GM12878 (cell line): ENCODE measurements at regions of chr16 and their contacts with region 1.

Region 1: GRCh38 chr16:27367461-27368357 is 34.3 kb upstream of the IL21R start:
- DNase-seq: peak; percentile 87
- ATAC-seq: peak; percentile 83
- H3K4me3 ChIP-seq: peak overlapping the region; percentile 46
- H3K27ac ChIP-seq: peak overlapping the region; percentile 95
- H3K4me1 ChIP-seq: peaks cover 34% of the 10 kb centered on the region
- H3K27me3 ChIP-seq: no peaks in the 10 kb centered on the region
- CTCF ChIP-seq: peak; percentile 84 to 91 (median 87)
- EP300 ChIP-seq: peak; percentile 72 to 86; a peak in 3 of 4 replicates
- POLR2A ChIP-seq: peak; percentile 54
- RAD21 ChIP-seq: peak; percentile 83

Region 2: GRCh38 chr16:27154705-27155521 is 212.8 kb before region 1 on chr16:
- CTCF ChIA-PET with region 1: interaction called, 93 read pairs
- POLR2A ChIA-PET with region 1: no interaction called
- RAD21 ChIA-PET with region 1: interaction called, 22 read pairs
- SMC1A ChIA-PET with region 1: interaction called, 43 read pairs
- in situ Hi-C with region 1: no loop called
- intact Hi-C with region 1: loop called (anchors 1 kb)
- DNase-seq: no peak
- ATAC-seq: peak; percentile 94
- H3K4me3 ChIP-seq: no peak overlapping the region
- H3K27ac ChIP-seq: no peak overlapping the region
- H3K4me1 ChIP-seq: peaks cover 3% of the 10 kb centered on the region
- H3K27me3 ChIP-seq: no peaks in the 10 kb centered on the region
- CTCF ChIP-seq: peak; percentile 84 to 99 (median 99)
- EP300 ChIP-seq: no peak
- POLR2A ChIP-seq: no peak
- RAD21 ChIP-seq: peak; percentile 72

Region 3: DNA sequence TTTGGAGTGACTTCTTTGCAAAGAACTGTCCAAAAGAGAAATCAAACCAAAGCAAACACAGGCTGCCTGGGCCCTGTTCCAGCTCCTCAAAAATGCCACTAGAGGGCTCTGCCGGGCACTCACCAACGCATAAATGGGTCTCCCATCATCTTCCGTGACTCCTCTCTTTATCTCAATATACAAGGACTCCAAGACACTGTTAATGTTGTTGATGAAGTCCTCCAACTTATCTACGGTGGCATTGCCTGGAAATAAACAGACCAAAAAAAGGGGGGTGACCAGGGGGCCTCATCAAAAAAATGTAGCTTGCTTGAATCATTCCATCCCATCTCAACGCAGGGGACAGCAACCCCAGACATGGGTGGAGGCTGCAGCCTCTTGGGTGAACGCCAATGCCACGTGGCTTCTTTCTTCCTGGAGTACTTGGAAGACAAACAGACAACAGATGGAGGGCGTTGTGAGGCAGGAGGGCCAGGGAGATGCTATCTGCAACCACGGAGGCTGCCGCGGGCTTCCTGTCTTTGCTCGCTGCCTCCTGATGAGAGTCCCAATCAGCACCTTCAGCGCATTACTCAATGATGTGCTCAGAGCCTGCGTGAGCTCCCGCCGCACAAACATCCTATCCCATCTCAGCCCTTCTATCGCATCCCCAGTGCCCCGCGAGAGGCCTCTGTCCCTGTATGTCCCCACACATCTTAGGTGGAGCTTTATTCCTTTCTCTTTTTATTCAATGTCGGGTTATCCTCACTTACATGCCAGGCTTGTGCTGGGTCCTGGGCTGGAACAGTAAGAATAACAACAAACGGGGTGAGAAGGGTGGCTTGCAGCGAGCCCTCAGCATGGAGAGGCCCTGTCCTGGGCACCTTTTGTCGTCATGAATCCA is 132.4 kb before region 1 on chr16:
- CTCF ChIA-PET with region 1: interaction called, 259 read pairs
- POLR2A ChIA-PET with region 1: interaction called, 15 read pairs
- RAD21 ChIA-PET with region 1: interaction called, 168 read pairs
- SMC1A ChIA-PET with region 1: interaction called, 152 read pairs
- in situ Hi-C with region 1: loop called (anchors 5 kb)
- intact Hi-C with region 1: loop called (anchors 1 kb)
- DNase-seq: peak; percentile 38
- ATAC-seq: peak; percentile 49
- H3K4me3 ChIP-seq: no peak overlapping the region
- H3K27ac ChIP-seq: no peak overlapping the region
- H3K4me1 ChIP-seq: peaks cover 56% of the 10 kb centered on the region
- H3K27me3 ChIP-seq: no peaks in the 10 kb centered on the region
- CTCF ChIP-seq: peak; percentile 88 to 95 (median 89); a peak in 5 of 6 replicates
- EP300 ChIP-seq: no peak
- POLR2A ChIP-seq: no peak
- RAD21 ChIP-seq: peak; percentile 90

Region 4: GRCh38 chr16:27273670-27274423 is 93.9 kb before region 1 on chr16:
- CTCF ChIA-PET with region 1: interaction called, 11 read pairs
- POLR2A ChIA-PET with region 1: interaction called, 5 read pairs
- RAD21 ChIA-PET with region 1: interaction called, 36 read pairs
- SMC1A ChIA-PET with region 1: interaction called, 41 read pairs
- in situ Hi-C with region 1: no loop called
- intact Hi-C with region 1: no loop called
- DNase-seq: no peak
- ATAC-seq: peak; percentile 82
- H3K4me3 ChIP-seq: no peak overlapping the region
- H3K27ac ChIP-seq: no peak overlapping the region
- H3K4me1 ChIP-seq: peaks cover 16% of the 10 kb centered on the region
- H3K27me3 ChIP-seq: no peaks in the 10 kb centered on the region
- CTCF ChIP-seq: no peak
- EP300 ChIP-seq: 0 out of 4 replicates have a peak, but pooled peaks of 1 of the 2 experiments have one; percentile 17
- POLR2A ChIP-seq: no peak
- RAD21 ChIP-seq: no peak

Region 5: DNA sequence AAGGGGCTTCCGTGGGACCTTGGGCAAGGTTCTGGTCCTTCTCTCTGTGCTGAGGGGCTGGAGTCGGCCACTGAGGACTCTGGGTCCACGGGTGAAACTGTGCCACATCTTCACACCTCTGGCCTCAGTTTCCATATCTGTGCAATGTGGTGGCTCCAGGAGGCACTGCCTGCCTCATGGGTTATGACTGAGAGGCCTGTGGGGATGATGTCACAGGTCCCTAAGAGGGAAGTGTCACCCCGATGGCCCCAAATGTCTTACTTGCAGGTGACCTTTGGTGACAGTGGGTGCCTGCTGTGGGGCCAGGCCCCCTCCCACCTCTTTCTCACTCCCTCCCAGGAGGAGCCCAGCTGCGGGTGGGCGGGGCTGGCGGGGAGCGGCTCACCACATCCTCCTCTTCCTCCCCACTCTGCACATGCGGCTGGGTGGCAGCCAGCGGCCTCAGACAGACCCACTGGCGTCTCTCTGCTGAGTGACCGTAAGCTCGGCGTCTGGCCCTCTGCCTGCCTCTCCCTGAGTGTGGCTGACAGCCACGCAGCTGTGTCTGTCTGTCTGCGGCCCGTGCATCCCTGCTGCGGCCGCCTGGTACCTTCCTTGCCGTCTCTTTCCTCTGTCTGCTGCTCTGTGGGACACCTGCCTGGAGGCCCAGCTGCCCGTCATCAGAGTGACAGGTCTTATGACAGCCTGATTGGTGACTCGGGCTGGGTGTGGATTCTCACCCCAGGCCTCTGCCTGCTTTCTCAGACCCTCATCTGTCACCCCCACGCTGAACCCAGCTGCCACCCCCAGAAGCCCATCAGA is 34.3 kb after region 1 on chr16 and contains the start of gene IL21R:
- CTCF ChIA-PET with region 1: interaction called, 34 read pairs
- POLR2A ChIA-PET with region 1: interaction called, 208 read pairs
- RAD21 ChIA-PET with region 1: interaction called, 224 read pairs
- SMC1A ChIA-PET with region 1: interaction called, 220 read pairs
- in situ Hi-C with region 1: no loop called
- intact Hi-C with region 1: no loop called
- DNase-seq: peak; percentile 85
- ATAC-seq: peak; percentile 56
- H3K4me3 ChIP-seq: peak within 1 kb of the TSS; percentile 86
- H3K27ac ChIP-seq: peak within 1 kb of the TSS; percentile 97
- H3K4me1 ChIP-seq: peaks cover 53% of the 10 kb centered on the region
- H3K27me3 ChIP-seq: no peaks in the 10 kb centered on the region
- CTCF ChIP-seq: no peak
- EP300 ChIP-seq: peak in 1 of 2 experiments; percentile 73; a peak in 2 of 4 replicates
- POLR2A ChIP-seq: peak; percentile 95
- RAD21 ChIP-seq: 0 out of 2 replicates have a peak, but pooled peaks have one; percentile 7
- polyA plus RNA-seq, gene IL21R: 5.3 to 9.7 TPM

Region 6: GRCh38 chr16:27455700-27456099 is 88.0 kb after region 1 on chr16:
- CTCF ChIA-PET with region 1: interaction called, 106 read pairs
- POLR2A ChIA-PET with region 1: interaction called, 10 read pairs
- RAD21 ChIA-PET with region 1: interaction called, 28 read pairs
- SMC1A ChIA-PET with region 1: interaction called, 62 read pairs
- in situ Hi-C with region 1: no loop called
- intact Hi-C with region 1: loop called (anchors 1 kb)
- DNase-seq: no peak
- ATAC-seq: no peak
- H3K4me3 ChIP-seq: no peak overlapping the region
- H3K27ac ChIP-seq: no peak overlapping the region
- H3K4me1 ChIP-seq: peaks cover 25% of the 10 kb centered on the region
- H3K27me3 ChIP-seq: no peaks in the 10 kb centered on the region
- CTCF ChIP-seq: no peak
- EP300 ChIP-seq: no peak
- POLR2A ChIP-seq: 0 out of 2 replicates have a peak, but pooled peaks have one; percentile 36
- RAD21 ChIP-seq: no peak